CD8-positive, alpha-beta T cell (primary cell): ENCODE measurements at regions of chr3 and their contacts with region 1.

Region 1: GRCh38 chr3:51974963-51975851 is at the start of gene ABHD14A:
- DNase-seq: peak; percentile 35 to 89 (median 69)
- ATAC-seq: peak; percentile 66
- H3K4me3 ChIP-seq: peak within 1 kb of the TSS; percentile 86 to 92
- H3K4me3 Mint-ChIP-seq: peak within 1 kb of the TSS; percentile 88
- H3K27ac ChIP-seq: peak within 1 kb of the TSS; percentile 50 to 72
- H3K27ac Mint-ChIP-seq: peak within 1 kb of the TSS; percentile 87
- H3K4me1 ChIP-seq: peaks cover 33% of the 10 kb centered on the region
- H3K4me1 Mint-ChIP-seq: peaks cover 31% of the 10 kb centered on the region
- H3K27me3 ChIP-seq: no peaks in the 10 kb centered on the region
- H3K27me3 Mint-ChIP-seq: no peaks in the 10 kb centered on the region
- CTCF ChIP-seq: no peak
- total RNA-seq, gene ABHD14A: 6.8 to 6.9 TPM

Region 2: GRCh38 chr3:51953445-51953844 is 21.8 kb before region 1 on chr3:
- CTCF ChIA-PET with region 1: interaction called, 13 read pairs
- POLR2A ChIA-PET with region 1: interaction called, 3 read pairs
- intact Hi-C with region 1: no loop called
- DNase-seq: no peak
- ATAC-seq: no peak
- H3K4me3 ChIP-seq: no peak overlapping the region
- H3K4me3 Mint-ChIP-seq: no peak overlapping the region
- H3K27ac ChIP-seq: no peak overlapping the region
- H3K27ac Mint-ChIP-seq: no peak overlapping the region
- H3K4me1 ChIP-seq: peaks cover 7% of the 10 kb centered on the region
- H3K4me1 Mint-ChIP-seq: peaks cover 5% of the 10 kb centered on the region
- H3K27me3 ChIP-seq: peaks cover 3 to 11% of the 10 kb centered on the region in 2 experiments
- H3K27me3 Mint-ChIP-seq: peaks cover 18% of the 10 kb centered on the region
- CTCF ChIP-seq: no peak

Region 3: DNA sequence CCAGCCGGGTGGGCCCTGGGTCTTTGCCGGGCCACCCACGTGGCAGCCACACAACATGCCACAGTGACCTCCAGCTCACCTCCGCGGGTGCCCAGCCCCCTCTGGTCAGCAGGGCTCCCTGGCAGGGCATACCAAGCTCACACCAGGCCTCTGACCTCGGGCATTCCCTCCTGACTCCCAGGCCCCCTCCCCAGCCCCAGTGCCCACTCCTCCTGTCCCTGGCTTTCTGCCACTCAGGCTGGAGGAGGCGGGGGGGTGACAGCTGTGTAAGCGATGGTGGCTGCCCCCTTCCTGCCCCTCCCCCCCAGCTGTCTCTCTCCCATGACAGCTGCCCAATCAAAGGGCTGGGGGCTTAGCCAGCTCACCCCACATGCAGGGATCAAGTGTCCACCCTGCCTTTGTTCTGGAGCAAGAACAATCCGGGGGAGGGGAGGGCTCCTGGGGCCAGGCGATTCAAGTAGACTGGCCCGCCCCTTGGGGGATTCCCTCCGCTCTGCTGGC is 11.2 kb before region 1 on chr3:
- CTCF ChIA-PET with region 1: interaction called, 24 read pairs
- POLR2A ChIA-PET with region 1: interaction called, 3 read pairs
- intact Hi-C with region 1: no loop called
- DNase-seq: peak in 1 of 9 experiments; percentile 6
- ATAC-seq: no peak
- H3K4me3 ChIP-seq: no peak overlapping the region
- H3K4me3 Mint-ChIP-seq: no peak overlapping the region
- H3K27ac ChIP-seq: no peak overlapping the region
- H3K27ac Mint-ChIP-seq: no peak overlapping the region
- H3K4me1 ChIP-seq: peaks cover 19% of the 10 kb centered on the region
- H3K4me1 Mint-ChIP-seq: peaks cover 21% of the 10 kb centered on the region
- H3K27me3 ChIP-seq: no peaks in the 10 kb centered on the region
- H3K27me3 Mint-ChIP-seq: no peaks in the 10 kb centered on the region
- CTCF ChIP-seq: no peak

Region 4: GRCh38 chr3:52112056-52112455 is 136.8 kb after region 1 on chr3:
- CTCF ChIA-PET with region 1: no interaction called
- POLR2A ChIA-PET with region 1: no interaction called
- intact Hi-C with region 1: no loop called
- DNase-seq: no peak
- ATAC-seq: no peak
- H3K4me3 ChIP-seq: no peak overlapping the region
- H3K4me3 Mint-ChIP-seq: no peak overlapping the region
- H3K27ac ChIP-seq: no peak overlapping the region
- H3K27ac Mint-ChIP-seq: no peak overlapping the region
- H3K4me1 ChIP-seq: no peaks in the 10 kb centered on the region
- H3K4me1 Mint-ChIP-seq: no peaks in the 10 kb centered on the region
- H3K27me3 ChIP-seq: no peaks in the 10 kb centered on the region
- H3K27me3 Mint-ChIP-seq: no peaks in the 10 kb centered on the region
- CTCF ChIP-seq: no peak

Region 5: DNA sequence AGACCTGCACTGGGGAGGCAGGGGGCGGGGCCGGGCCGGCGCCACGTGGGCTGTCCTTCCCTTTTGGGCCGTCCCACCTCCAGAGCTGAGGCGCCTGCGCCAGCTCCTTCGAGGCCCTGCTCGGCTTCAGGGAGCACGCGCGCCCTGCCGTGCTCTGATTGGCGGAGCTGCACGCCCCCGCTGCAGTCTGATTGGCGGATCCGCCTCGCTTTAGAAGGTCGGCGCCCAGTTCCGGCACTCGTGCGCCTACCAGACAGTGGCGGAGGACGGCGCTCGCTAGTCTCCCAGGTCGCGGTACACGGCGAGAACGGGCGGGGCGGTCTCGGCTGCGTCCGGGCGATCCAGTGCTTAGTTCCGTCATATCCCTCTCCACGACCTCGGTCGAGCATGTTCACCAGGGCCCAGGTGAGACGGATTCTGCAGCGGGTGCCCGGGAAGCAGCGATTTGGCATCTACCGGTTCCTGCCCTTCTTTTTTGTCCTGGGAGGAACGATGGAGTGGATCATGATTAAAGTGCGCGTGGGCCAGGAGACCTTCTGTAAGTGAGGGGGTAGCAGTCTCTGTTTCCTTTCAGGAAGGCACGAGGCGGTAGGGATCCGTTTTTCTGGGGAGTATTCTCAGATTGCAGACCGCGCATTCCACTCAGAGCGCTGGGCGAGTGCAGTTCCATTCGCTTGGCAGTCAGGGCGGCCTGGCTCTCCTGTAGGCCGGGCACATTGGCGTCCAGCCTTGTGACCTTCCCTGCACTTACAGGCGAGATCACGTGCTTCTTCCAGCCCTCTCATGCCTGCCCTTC is 561.4 kb after region 1 on chr3 and contains the start of gene UQCC5:
- CTCF ChIA-PET with region 1: no interaction called
- POLR2A ChIA-PET with region 1: no interaction called
- intact Hi-C with region 1: loop called in 1 of 2 experiments (anchors 10 kb)
- DNase-seq: peak; percentile 92 to 99 (median 95)
- ATAC-seq: peak; percentile 88
- H3K4me3 ChIP-seq: peak within 1 kb of the TSS; percentile 79 to 88
- H3K4me3 Mint-ChIP-seq: peak within 1 kb of the TSS; percentile 99
- H3K27ac ChIP-seq: peak within 1 kb of the TSS; percentile 82 to 83
- H3K27ac Mint-ChIP-seq: peak within 1 kb of the TSS; percentile 98
- H3K4me1 ChIP-seq: peaks cover 41% of the 10 kb centered on the region
- H3K4me1 Mint-ChIP-seq: peaks cover 55% of the 10 kb centered on the region
- H3K27me3 ChIP-seq: peaks cover 0 to 8% of the 10 kb centered on the region in 2 experiments
- H3K27me3 Mint-ChIP-seq: no peaks in the 10 kb centered on the region
- CTCF ChIP-seq: no peak
- total RNA-seq, gene UQCC5: 5.2 to 6.8 TPM